ENCODE measurements at regions of chr21 and their contacts with region 1.

Region 1: DNA sequence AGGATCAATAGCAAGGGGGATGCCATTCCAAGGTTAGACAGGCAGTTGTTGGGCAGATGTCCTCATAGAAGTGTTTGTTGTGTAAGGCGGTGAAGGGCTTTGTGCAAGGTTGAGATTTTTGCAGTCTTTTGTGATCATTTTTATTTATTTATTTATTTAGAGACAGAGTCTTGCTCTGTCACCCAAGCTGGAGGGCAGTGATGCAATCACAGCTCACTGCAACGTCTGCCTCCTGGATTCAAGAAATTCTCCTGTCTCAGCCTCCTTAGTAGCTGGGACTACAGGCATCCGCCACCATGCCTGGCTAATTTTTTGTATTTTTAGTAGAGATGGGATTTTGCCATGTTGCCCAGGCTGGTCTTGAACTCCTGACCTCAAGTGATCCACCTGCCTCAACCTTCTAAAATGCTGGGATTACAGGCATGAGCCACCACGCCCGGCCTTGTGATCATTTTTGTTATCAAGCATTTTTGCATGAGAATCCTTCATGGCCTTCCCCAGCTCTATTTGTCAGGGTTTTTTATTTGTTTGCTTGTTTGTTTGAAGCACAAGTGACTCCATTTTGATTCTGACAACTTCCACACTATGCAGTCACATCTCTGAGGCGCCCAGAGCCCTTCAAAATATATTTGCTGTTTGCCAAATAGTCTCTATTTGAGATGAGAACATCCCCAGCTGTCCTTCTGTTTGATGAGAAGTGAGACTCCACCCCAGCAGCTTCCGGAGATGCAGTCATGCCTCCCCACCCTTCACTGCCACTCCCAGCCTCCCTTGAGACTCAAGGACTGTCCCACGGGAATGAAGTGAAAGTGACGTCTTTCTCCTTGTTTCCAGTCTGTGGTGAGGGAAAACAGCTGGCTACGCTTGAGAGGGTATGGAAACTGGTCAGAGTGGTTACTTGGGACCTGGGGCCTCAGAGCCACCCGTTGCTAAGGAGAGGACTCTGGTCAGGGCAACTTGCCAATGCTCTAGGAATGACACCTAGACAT is 38.0 kb downstream of the TMEM50B start:
- DNase-seq: no peak
- ATAC-seq: no peak
- H3K4me3 ChIP-seq: no peak overlapping the region
- H3K4me3 Mint-ChIP-seq: no peak overlapping the region
- H3K27ac ChIP-seq: no peak overlapping the region
- H3K27ac Mint-ChIP-seq: peak overlapping the region in 6 of 9 donors; percentile 9 to 78 (median 55)
- H3K4me1 ChIP-seq: no peaks in the 10 kb centered on the region
- H3K4me1 Mint-ChIP-seq: peaks cover 4 to 10% (median 6%) of the 10 kb centered on the region in 7 donors
- H3K27me3 ChIP-seq: no peaks in the 10 kb centered on the region
- H3K27me3 Mint-ChIP-seq: no peaks in the 10 kb centered on the region

Region 2: GRCh38 chr21:32929633-32930038 is 512.1 kb before region 1 on chr21:
- CTCF ChIA-PET with region 1: interaction called, 4 read pairs
- POLR2A ChIA-PET with region 1: no interaction called
- intact Hi-C with region 1: loop called in 1 of 2 experiments (anchors 10 kb)
- DNase-seq: no peak
- ATAC-seq: no peak
- H3K4me3 ChIP-seq: no peak overlapping the region
- H3K4me3 Mint-ChIP-seq: peak overlapping the region in 2 of 10 donors; percentile 4 to 37
- H3K27ac ChIP-seq: no peak overlapping the region
- H3K27ac Mint-ChIP-seq: peak overlapping the region in 3 of 9 donors; percentile 21 to 41 (median 34)
- H3K4me1 ChIP-seq: peaks cover 33 to 44% of the 10 kb centered on the region in 2 donors
- H3K4me1 Mint-ChIP-seq: peaks cover 14 to 43% (median 28%) of the 10 kb centered on the region in 7 donors
- H3K27me3 ChIP-seq: no peaks in the 10 kb centered on the region
- H3K27me3 Mint-ChIP-seq: peaks cover 0 to 2% (median 0%) of the 10 kb centered on the region in 5 donors

Region 3: GRCh38 chr21:33348706-33349105 is 93.1 kb before region 1 on chr21:
- CTCF ChIA-PET with region 1: interaction called, 4 read pairs
- POLR2A ChIA-PET with region 1: interaction called, 4 read pairs
- intact Hi-C with region 1: loop called in 1 of 2 experiments (anchors 1 kb)
- DNase-seq: no peak
- ATAC-seq: no peak
- H3K4me3 ChIP-seq: no peak overlapping the region
- H3K4me3 Mint-ChIP-seq: no peak overlapping the region
- H3K27ac ChIP-seq: no peak overlapping the region
- H3K27ac Mint-ChIP-seq: peak overlapping the region in 5 of 9 donors; percentile 19 to 90 (median 74)
- H3K4me1 ChIP-seq: peaks cover 0 to 14% of the 10 kb centered on the region in 2 donors
- H3K4me1 Mint-ChIP-seq: peaks cover 6 to 42% (median 25%) of the 10 kb centered on the region in 7 donors
- H3K27me3 ChIP-seq: no peaks in the 10 kb centered on the region
- H3K27me3 Mint-ChIP-seq: no peaks in the 10 kb centered on the region

Region 4: GRCh38 chr21:33380483-33380998 is 61.2 kb before region 1 on chr21:
- CTCF ChIA-PET with region 1: interaction called, 5 read pairs
- POLR2A ChIA-PET with region 1: interaction called, 4 read pairs
- intact Hi-C with region 1: loop called in 1 of 2 experiments (anchors 2 kb)
- DNase-seq: peak; percentile 46 to 81 (median 63)
- ATAC-seq: peak; percentile 78
- H3K4me3 ChIP-seq: peak overlapping the region; percentile 0
- H3K4me3 Mint-ChIP-seq: peak overlapping the region; percentile 34 to 98 (median 66)
- H3K27ac ChIP-seq: peak overlapping the region; percentile 53
- H3K27ac Mint-ChIP-seq: peak overlapping the region; percentile 69 to 91 (median 87)
- H3K4me1 ChIP-seq: peaks cover 45 to 60% of the 10 kb centered on the region in 2 donors
- H3K4me1 Mint-ChIP-seq: peaks cover 48 to 70% (median 63%) of the 10 kb centered on the region in 7 donors
- H3K27me3 ChIP-seq: peaks cover 0 to 6% of the 10 kb centered on the region in 2 donors
- H3K27me3 Mint-ChIP-seq: peaks cover 0 to 40% (median 0%) of the 10 kb centered on the region in 5 donors

Region 5: GRCh38 chr21:33608559-33608958 is 166.8 kb after region 1 on chr21:
- CTCF ChIA-PET with region 1: interaction called, 4 read pairs
- POLR2A ChIA-PET with region 1: no interaction called
- intact Hi-C with region 1: loop called in 1 of 2 experiments (anchors 1 kb)
- DNase-seq: no peak
- ATAC-seq: no peak
- H3K4me3 ChIP-seq: no peak overlapping the region
- H3K4me3 Mint-ChIP-seq: no peak overlapping the region
- H3K27ac ChIP-seq: no peak overlapping the region
- H3K27ac Mint-ChIP-seq: peak overlapping the region in 1 of 9 donors; percentile 7
- H3K4me1 ChIP-seq: no peaks in the 10 kb centered on the region
- H3K4me1 Mint-ChIP-seq: peaks cover 0 to 5% (median 4%) of the 10 kb centered on the region in 7 donors
- H3K27me3 ChIP-seq: no peaks in the 10 kb centered on the region
- H3K27me3 Mint-ChIP-seq: no peaks in the 10 kb centered on the region

Measured in naive thymus-derived CD4-positive, alpha-beta T cell (primary cell).